Caco-2 (cell line): ENCODE measurements at regions of chr4 and their contacts with region 1.

Region 1: DNA sequence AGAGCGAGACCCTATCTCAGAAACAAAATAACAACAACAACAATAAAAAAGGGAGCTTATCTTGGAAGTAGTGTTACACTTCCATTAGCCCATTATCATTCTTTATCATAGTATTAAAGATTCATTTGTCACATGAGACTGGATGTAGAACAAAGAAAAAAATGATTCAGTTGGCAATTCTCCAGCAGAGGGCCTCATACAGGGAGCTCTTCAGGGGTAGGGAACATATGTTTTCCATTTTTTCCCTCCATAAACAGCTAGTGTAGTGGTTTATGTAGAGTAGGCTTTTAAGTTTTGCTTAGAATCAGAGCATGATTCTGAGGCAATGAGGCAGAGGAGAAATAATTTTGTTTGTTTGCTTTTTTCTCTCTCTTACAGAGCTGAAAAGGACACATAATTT is 5.8 kb downstream of the CPE start:
- DNase-seq: peak in 1 of 2 experiments; percentile 11
- H3K4me3 ChIP-seq: no peak overlapping the region
- H3K4me3 Mint-ChIP-seq: no peak overlapping the region
- H3K27ac Mint-ChIP-seq: no peak overlapping the region
- H3K4me1 ChIP-seq: no peaks in the 10 kb centered on the region
- H3K4me1 Mint-ChIP-seq: peaks cover 7% of the 10 kb centered on the region
- H3K27me3 ChIP-seq: no peaks in the 10 kb centered on the region
- H3K27me3 Mint-ChIP-seq: peaks cover 6% of the 10 kb centered on the region
- CTCF ChIP-seq: peak in 1 of 2 experiments; percentile 23

Region 2: GRCh38 chr4:165440415-165441189 is 56.0 kb after region 1 on chr4:
- CTCF ChIA-PET with region 1: no interaction called
- POLR2A ChIA-PET with region 1: no interaction called
- intact Hi-C with region 1: loop called (anchors 2 kb)
- DNase-seq: peak; percentile 47 to 51
- H3K4me3 ChIP-seq: no peak overlapping the region
- H3K4me3 Mint-ChIP-seq: no peak overlapping the region
- H3K27ac Mint-ChIP-seq: no peak overlapping the region
- H3K4me1 ChIP-seq: peaks cover 7% of the 10 kb centered on the region; the same call in 1 of the 2 replicates
- H3K4me1 Mint-ChIP-seq: peaks cover 13% of the 10 kb centered on the region
- H3K27me3 ChIP-seq: no peaks in the 10 kb centered on the region
- H3K27me3 Mint-ChIP-seq: no peaks in the 10 kb centered on the region
- CTCF ChIP-seq: no peak

Region 3: GRCh38 chr4:165621983-165622382 is 237.4 kb after region 1 on chr4:
- CTCF ChIA-PET with region 1: no interaction called
- POLR2A ChIA-PET with region 1: no interaction called
- intact Hi-C with region 1: no loop called
- DNase-seq: no peak
- H3K4me3 ChIP-seq: no peak overlapping the region
- H3K4me3 Mint-ChIP-seq: no peak overlapping the region
- H3K27ac Mint-ChIP-seq: no peak overlapping the region
- H3K4me1 ChIP-seq: no peaks in the 10 kb centered on the region
- H3K4me1 Mint-ChIP-seq: no peaks in the 10 kb centered on the region
- H3K27me3 ChIP-seq: no peaks in the 10 kb centered on the region
- H3K27me3 Mint-ChIP-seq: no peaks in the 10 kb centered on the region
- CTCF ChIP-seq: no peak